ENCODE measurements at regions of chr17 and their contacts with region 1.

Region 1: DNA sequence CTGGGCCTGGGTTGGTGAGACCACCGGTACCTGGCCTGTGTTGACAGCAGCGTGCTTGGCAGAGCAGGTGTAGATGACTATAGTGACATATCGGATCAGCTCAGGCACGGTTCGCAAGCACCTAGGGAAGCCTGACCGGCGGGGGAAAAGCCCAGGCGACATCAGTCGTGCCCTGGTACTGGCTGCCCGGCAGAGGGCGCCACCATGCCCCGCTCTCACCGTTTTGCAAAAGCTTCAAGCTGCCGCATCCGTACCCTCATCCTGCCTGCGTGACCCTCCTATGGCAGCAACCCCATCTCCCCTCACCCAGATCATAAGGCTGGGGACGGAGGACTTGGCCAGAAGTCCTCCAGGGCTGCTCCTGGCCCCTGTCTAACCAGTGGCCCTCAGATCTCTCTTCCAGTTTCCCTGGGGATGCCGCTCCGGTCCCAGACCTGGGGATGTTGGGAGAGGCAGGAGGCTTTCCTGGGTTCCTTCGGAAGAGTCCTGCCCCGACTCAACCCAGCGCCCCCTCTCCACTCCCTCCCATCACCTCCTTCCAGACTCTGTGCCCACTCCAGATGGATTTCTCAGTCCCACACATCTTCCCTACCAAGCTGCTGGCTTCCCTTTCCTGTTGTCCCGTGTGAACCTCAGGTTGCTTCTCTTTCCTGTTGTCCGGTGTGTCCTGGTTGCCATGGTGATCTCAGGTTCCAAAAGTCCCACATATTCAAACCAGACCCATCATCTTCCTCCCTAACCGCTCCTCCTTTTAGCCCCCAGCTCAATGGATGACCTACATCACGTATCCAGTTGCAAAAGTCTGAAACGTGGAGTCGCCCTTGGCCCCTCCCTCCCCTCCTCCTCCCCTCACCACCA is 13.7 kb downstream of the ALOX12B start:
- DNase-seq: peak; percentile 84 to 91
- ATAC-seq: peak; percentile 75 to 92
- H3K4me3 ChIP-seq: peak overlapping the region; percentile 34
- H3K27ac ChIP-seq: peak overlapping the region in 1 of 2 experiments; percentile 27; a peak in 2 of 6 replicates
- H3K4me1 ChIP-seq: peaks cover 15% of the 10 kb centered on the region
- CTCF ChIP-seq: peak; percentile 97
- EP300 ChIP-seq: no peak
- POLR2A ChIP-seq: no peak
- RAD21 ChIP-seq: peak; percentile 35 to 42; a peak in 2 of 5 replicates

Region 2: GRCh38 chr17:7403977-7404736 is 669.7 kb before region 1 on chr17 and contains the start of gene TMEM256:
- CTCF ChIA-PET with region 1: no interaction called
- POLR2A ChIA-PET with region 1: interaction called, 14 read pairs
- DNase-seq: peak; percentile 98 to 100
- ATAC-seq: peak; percentile 85 to 97
- H3K4me3 ChIP-seq: peak within 1 kb of the TSS; percentile 88
- H3K27ac ChIP-seq: peak within 1 kb of the TSS; percentile 81 to 92
- H3K4me1 ChIP-seq: peaks cover 28% of the 10 kb centered on the region
- CTCF ChIP-seq: no peak
- EP300 ChIP-seq: no peak
- POLR2A ChIP-seq: peak; percentile 88
- RAD21 ChIP-seq: no peak
- polyA plus RNA-seq, gene TMEM256: 127 and 210 TPM in 2 replicates

Region 3: DNA sequence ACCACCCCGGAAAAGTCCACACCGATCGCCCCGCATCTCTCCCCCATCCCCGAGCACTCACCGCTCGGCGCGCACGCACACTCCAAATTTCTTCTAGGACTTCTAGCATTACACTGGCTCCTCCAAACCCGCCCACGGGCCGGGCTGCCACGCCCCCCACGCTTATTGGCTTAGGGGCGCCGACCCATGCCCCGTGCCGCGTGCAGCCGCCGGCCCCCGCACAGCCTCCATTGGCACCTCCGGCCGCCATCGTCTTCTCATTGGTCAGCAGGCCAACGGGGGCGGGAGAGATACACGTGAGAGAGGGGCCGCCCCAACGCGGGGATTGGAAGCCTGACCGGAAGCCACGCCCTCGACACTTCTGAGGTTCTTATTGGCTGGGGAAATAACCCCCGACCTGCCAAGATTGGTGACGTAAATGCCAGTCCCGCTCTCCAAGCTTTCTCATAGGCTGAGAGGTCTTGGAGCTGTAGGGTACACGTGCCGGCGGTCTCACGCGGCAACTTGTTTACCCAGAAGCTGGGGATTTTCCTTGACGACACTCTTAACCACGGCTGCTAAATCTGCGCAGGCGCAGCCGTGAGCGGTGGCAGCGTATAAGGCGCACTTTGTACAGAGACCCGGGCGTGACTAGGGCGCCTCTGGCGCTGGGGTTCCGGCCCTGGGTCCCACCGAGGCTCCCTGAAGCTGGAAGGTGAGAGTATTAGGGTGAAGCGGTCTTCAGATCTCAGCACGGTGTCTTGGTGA is 82.6 kb after region 1 on chr17:
- CTCF ChIA-PET with region 1: interaction called, 15 read pairs
- POLR2A ChIA-PET with region 1: no interaction called
- DNase-seq: peak; percentile 100
- ATAC-seq: peak; percentile 57 to 73
- H3K4me3 ChIP-seq: peak overlapping the region; percentile 65
- H3K27ac ChIP-seq: peak overlapping the region; percentile 89 to 93
- H3K4me1 ChIP-seq: peaks cover 55% of the 10 kb centered on the region
- CTCF ChIP-seq: no peak
- EP300 ChIP-seq: no peak
- POLR2A ChIP-seq: peak; percentile 54
- RAD21 ChIP-seq: peak; percentile 33 to 40; a peak in 2 of 5 replicates